Right ventricle myocardium inferior (tissue), 1 donor: ENCODE measurements at regions of chr13 and their contacts with region 1.

Region 1: DNA sequence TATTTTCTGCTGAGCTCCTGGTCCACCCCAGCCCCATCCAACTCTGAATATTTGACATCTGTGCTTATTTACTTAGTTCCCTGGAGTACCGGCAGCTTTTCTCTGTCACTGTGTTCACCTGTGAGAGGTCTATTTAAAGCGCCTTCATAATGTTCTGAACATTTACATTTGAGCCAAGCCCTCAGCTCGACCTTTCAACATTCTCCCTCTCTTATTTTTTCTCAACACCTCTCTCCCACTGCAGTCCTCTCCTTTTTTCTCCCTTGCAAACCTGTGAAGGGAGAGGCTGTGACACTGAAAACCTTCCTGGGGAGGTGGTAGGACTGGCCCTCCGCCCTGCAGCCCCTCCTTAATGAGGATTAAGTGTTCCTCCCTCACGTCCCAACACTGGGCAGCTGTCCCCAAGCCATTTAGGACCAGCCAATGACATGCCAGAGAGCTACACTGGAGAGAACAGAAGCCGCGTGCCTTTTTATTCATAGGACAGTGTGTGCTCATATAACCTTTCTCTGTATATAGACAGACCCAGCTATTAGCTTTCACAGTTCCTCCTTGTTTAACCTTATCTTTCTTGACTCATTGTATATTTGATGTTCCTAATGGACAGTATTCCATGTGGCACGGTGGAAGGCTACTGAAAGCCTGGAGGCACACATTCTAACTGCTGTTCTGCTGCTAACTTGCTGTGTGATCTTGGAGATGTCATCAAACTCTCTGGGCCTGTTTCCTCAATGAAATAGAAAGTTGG is 134.8 kb downstream of the NUFIP1 start:
- DNase-seq: peak; percentile 75
- ATAC-seq: peak; percentile 95

Region 2: DNA sequence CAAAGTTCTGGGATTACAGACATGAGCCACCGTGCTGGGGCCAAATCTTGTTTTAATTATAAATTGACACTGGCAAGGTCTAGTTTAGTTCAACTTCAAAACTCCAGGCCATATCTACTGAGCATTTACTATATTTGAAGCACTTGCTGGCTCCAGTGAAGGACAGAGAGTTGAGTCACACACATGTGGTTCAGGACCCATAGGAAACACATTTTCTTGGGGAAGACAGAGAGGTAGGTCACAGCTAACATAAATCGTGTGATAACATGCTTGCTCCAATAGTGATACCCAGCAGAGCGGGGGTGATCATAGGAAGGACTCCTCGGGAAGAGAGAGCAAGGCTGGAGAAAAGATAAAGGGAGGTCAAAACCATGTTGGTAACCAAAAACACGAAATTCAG is 107.8 kb before region 1 on chr13:
- intact Hi-C with region 1: loop called (anchors 2 kb)
- DNase-seq: no peak
- ATAC-seq: peak; percentile 20

Region 3: GRCh38 chr13:44870456-44870929 is 16.0 kb after region 1 on chr13:
- intact Hi-C with region 1: loop called (anchors 2 kb)
- DNase-seq: peak; percentile 73
- ATAC-seq: peak; percentile 90